HAP-1 (cell line): ENCODE measurements at regions of chr12 and their contacts with region 1.

Region 1: DNA sequence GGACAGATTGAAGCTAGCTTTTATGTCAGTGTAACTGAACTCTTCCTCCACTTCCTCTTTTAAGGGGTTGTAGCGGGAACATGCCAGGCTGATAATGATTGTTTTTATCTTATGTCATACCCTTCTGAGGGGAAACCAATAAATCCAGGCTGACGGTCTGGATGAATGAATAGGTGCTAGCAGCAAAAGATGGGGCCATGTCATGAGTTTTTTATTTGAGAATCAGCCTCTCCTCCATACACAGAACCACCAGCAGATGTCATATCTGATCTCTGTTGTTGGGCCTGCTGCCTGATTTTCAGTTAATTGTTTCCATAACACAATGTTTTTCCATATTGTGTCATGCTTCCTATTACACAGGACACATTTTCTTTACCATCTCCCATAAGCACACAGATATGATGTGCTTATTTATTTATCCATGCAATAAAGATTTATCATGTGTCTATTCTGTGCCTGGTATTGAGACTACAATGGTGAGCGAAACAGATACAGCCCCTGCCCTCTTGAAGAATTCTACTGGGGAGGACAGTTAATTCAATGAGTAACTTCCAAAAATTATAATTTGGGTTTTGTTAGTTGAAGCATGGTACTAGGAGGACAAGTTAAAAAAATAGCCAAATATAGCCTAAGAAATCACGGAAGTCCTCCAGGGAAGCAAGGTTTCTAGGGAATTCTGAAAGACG is 33.6 kb upstream of the CRY1 start:
- DNase-seq: no peak
- H3K4me3 ChIP-seq: no peak overlapping the region
- H3K4me1 ChIP-seq: peaks cover 22% of the 10 kb centered on the region
- H3K27me3 ChIP-seq: peaks cover 17% of the 10 kb centered on the region; the same call in 1 of the 2 replicates

Region 2: DNA sequence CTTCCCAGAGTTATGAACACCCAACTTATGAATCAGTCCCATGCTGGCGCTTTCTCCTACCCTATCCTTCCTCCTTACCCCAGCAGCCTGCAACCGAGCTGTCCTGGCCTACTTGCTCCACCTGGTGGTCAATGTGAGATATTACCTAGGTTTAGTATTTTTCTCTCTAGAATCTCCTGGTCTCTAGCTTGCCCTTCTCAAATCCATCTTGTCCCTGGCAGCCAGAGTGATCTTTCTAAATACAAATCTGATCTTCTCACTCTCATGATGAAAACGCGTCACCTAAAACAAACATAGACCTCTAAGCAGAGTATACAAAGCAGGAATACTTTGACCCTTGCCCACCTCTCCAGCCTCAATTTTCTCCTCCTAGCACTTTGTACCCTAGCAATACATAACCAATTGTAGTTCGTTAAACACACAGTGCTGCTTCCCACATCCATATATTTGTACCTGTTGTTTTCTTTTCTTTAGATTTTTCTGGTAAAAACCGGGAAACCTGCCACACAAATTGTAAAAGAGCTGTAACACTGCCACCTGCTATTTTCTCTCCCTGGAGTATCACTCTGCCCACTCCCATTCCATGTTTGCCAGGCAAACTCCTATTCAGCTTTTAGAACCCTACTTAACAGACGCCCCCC is 844.4 kb before region 1 on chr12:
- in situ Hi-C with region 1: no loop called
- DNase-seq: peak; percentile 71 to 78
- H3K4me3 ChIP-seq: no peak overlapping the region
- H3K4me1 ChIP-seq: no peaks in the 10 kb centered on the region
- H3K27me3 ChIP-seq: peaks cover 13% of the 10 kb centered on the region

Region 3: GRCh38 chr12:107607464-107608392 is 480.8 kb after region 1 on chr12:
- in situ Hi-C with region 1: loop called (anchors 5 kb)
- DNase-seq: peak; percentile 58 to 89
- H3K4me3 ChIP-seq: no peak overlapping the region
- H3K4me1 ChIP-seq: no peaks in the 10 kb centered on the region
- H3K27me3 ChIP-seq: no peaks in the 10 kb centered on the region